CD4-positive, alpha-beta memory T cell (primary cell): ENCODE measurements at regions of chr11 and their contacts with region 1.

Region 1: GRCh38 chr11:33015621-33016551 is at the start of gene DEPDC7:
- DNase-seq: peak; percentile 66 to 73 (median 69)
- H3K4me3 ChIP-seq: peak within 1 kb of the TSS; percentile 43 to 49
- H3K4me3 Mint-ChIP-seq: peak within 1 kb of the TSS; percentile 82 to 88 (median 86)
- H3K27ac ChIP-seq: no peak within 1 kb of the TSS
- H3K27ac Mint-ChIP-seq: peak within 1 kb of the TSS in 3 of 7 donors; percentile 8 to 66 (median 25)
- H3K4me1 ChIP-seq: peaks cover 25% of the 10 kb centered on the region
- H3K4me1 Mint-ChIP-seq: peaks cover 14 to 42% (median 25%) of the 10 kb centered on the region in 4 donors
- H3K27me3 ChIP-seq: peaks cover 3% of the 10 kb centered on the region
- H3K27me3 Mint-ChIP-seq: peaks cover 9 to 19% of the 10 kb centered on the region in 2 donors
- total RNA-seq, gene DEPDC7: 1.4 to 1.9 TPM

Region 2: DNA sequence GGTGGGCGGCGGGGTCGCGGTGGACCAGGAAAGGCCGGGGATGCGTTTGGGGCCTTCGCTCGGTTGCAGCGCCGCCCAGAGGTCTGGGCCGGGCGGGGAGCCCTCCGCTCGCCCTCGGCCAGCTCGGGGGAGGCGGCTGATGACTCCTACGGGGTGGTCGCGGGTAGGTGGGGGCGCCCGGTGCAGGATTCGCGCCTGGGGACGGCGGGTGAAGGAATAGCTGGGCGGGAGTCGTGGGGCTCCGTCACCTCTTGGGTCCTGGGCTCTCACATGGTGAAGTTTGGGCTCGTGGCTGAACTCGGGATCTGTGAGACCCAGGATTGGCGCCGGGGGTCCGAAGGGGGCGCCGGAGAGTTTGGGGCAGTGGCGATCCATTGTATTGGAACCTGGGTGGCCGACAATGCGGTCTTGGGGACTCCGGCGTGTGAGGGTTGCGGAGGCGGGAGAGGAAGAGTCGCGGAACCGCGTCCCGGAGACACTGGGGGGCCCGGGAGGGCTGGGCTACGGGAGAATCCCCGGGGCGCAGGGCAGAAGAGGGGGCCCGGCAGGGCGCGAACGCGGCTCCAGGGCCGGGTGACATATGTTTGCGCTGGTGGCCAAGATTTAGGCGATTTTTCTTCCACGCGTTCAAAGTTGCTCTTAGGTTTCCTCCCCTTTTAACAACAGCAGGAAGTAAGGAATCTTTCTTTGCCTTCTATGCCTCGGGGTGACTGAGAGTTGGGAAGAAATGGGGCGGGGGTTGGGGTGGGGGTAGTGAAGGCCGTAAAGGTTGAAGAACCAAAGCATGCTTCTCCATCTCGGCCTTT is 122.3 kb before region 1 on chr11:
- CTCF ChIA-PET with region 1: no interaction called
- POLR2A ChIA-PET with region 1: interaction called, 5 read pairs
- intact Hi-C with region 1: loop called (anchors 1 kb)
- DNase-seq: peak in 3 of 5 donors; percentile 36 to 61 (median 38)
- H3K4me3 ChIP-seq: peak overlapping the region; percentile 57 to 72
- H3K4me3 Mint-ChIP-seq: peak overlapping the region; percentile 87 to 96 (median 94)
- H3K27ac ChIP-seq: peak overlapping the region; percentile 58
- H3K27ac Mint-ChIP-seq: peak overlapping the region; percentile 84 to 94 (median 88)
- H3K4me1 ChIP-seq: peaks cover 17% of the 10 kb centered on the region
- H3K4me1 Mint-ChIP-seq: peaks cover 20 to 36% (median 29%) of the 10 kb centered on the region in 4 donors
- H3K27me3 ChIP-seq: no peaks in the 10 kb centered on the region
- H3K27me3 Mint-ChIP-seq: no peaks in the 10 kb centered on the region

Region 3: DNA sequence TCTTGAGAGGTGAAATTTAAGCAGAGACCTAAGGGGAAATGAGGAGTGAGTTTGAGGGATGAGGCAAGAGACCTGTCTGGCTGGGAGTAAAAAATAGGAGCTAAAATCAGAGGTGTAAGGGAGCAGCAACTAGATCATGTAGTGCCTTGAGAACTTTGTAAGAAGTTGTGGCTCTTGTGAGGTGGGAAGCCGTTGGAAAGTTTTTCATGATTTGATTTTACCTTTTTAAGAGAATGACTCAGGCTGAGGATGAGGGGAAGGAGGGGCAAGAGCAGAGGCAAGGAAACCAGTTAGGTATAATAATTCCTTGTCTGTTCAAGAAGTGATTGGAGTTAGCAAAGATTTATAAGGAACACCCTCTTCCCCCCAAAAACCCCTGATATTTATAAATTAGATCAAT is 97.5 kb before region 1 on chr11:
- CTCF ChIA-PET with region 1: no interaction called
- POLR2A ChIA-PET with region 1: no interaction called
- intact Hi-C with region 1: no loop called
- DNase-seq: no peak
- H3K4me3 ChIP-seq: no peak overlapping the region
- H3K4me3 Mint-ChIP-seq: no peak overlapping the region
- H3K27ac ChIP-seq: no peak overlapping the region
- H3K27ac Mint-ChIP-seq: peak overlapping the region in 4 of 7 donors; percentile 32 to 38 (median 36)
- H3K4me1 ChIP-seq: no peaks in the 10 kb centered on the region
- H3K4me1 Mint-ChIP-seq: peaks cover 19 to 34% (median 21%) of the 10 kb centered on the region in 4 donors
- H3K27me3 ChIP-seq: no peaks in the 10 kb centered on the region
- H3K27me3 Mint-ChIP-seq: no peaks in the 10 kb centered on the region